SK-MEL-5 (cell line): ENCODE measurements at regions of chr15 and their contacts with region 1.

Region 1: GRCh38 chr15:33985290-33985689 is 17.0 kb downstream of the CHRM5 start:
- DNase-seq: peak; percentile 60

Region 2: GRCh38 chr15:33742800-33743199 is 242.5 kb before region 1 on chr15:
- in situ Hi-C with region 1: loop called (anchors 10 kb)
- DNase-seq: no peak